Endothelial cell of umbilical vein (primary cell): ENCODE measurements at regions of chr21 and their contacts with region 1.

Region 1: DNA sequence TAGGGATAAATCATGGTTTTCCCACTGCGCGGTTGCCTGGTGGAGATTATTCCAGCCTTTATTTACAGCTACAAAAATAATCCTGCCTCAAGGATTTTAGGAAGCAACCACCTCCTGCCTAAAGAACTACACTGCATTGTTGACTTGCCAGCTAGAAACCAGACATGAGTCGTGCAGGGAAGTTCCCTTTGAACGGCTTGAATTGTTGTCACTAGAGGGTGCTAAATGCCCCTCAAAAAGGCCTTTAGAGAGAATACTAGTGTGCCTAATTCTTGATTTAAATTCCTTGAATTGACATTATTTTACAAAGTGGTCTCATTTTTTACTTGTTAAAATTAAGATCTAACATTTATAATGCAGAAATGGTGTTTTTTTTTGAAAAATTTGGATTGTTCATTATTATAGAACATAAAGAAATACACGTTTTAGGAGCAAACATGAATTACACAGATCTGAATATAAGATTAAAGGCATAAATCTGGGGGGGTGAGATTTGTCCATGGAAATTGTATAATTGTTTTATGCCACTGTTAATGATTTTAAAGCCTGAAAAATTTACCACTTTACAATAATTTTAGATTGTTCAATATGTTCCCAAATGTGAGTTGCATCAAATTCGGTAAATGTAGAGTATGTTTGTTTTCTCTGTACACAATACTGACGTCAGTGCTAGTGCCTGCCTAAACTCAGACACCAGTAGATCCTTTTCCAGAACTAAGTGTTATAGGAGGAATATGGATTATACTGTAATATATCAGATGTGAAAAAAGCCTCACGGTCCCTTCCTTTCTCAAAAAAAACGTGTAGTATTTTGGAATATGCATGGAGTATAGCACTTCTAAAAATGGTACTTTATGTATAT is 7.6 kb upstream of the ERG start:
- DNase-seq: peak; percentile 93
- H3K4me3 ChIP-seq: peak overlapping the region; percentile 7 to 93 (median 43)
- H3K27ac ChIP-seq: peak overlapping the region; percentile 97
- H3K4me1 ChIP-seq: peaks cover 48% of the 10 kb centered on the region
- H3K27me3 ChIP-seq: no peaks in the 10 kb centered on the region
- CTCF ChIP-seq: peak; percentile 62 to 65
- POLR2A ChIP-seq: peak; percentile 45

Region 2: DNA sequence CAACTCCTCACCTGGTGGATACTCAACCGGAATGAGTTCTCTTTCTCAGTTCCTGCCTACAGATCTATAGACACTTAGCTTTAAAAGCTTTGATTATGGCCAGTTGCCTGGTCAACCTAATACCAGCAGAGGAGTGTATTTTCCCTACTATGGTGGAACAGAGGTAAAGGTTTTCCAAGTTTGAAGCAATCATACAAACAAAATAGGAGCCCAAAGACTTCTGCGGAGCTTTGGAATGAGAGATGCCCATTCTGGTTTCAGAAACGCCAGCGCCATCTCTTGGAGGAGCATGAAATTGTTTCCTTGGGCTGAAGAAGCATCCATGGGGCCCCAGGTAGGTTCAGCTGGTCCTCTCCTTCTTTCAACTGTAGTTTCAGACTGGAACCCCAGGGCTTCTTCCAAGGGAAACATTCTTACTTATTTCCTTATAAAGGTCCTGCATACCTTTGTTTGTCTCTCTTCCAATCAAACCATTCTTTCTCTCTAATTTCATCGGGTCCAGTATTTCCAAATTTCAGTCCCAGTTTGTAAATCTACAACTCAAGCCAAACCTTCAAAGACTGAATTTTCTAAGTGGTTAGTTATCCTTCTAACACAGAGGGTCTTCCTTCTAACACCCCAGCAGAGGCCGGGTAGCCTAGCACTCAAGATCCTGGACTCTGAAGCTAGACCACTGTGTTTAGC is 153.2 kb before region 1 on chr21:
- CTCF ChIA-PET with region 1: no interaction called
- POLR2A ChIA-PET with region 1: no interaction called
- dilution Hi-C with region 1: no loop called
- intact Hi-C with region 1: no loop called
- DNase-seq: peak; percentile 76
- H3K4me3 ChIP-seq: no peak overlapping the region
- H3K27ac ChIP-seq: peak overlapping the region; percentile 69
- H3K4me1 ChIP-seq: peaks cover 14% of the 10 kb centered on the region
- H3K27me3 ChIP-seq: no peaks in the 10 kb centered on the region
- CTCF ChIP-seq: peak; percentile 78 to 79
- POLR2A ChIP-seq: no peak

Region 3: DNA sequence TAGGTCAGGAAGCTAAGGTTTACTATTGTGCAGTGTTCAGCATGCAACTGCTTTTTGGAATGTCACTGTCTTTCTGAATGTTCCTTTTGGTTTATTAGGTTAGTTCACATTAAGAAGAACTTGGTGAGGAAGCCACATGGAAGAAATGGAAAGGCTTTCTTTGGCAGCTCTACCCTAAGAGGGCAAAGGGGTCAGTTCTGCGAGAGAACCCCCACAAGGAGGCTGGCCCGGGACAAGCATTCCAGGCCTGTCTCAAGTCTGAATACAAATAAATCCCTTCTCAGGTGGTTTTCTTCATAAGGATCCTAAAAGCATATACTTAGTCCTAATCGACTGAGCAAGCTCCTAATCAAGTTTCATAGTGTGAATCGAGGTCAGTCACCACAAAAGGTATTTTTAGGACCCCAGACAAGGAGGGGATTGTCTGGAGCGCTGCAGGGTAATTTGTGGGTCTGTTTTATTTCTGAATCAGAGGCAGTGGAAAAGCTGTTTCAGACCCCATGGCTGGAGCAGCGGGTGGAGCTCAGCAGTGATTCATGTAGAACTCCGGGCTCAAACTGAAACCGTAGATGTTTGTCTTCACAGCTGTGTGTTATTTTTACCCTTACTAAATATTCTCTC is 70.9 kb before region 1 on chr21:
- CTCF ChIA-PET with region 1: no interaction called
- POLR2A ChIA-PET with region 1: no interaction called
- dilution Hi-C with region 1: no loop called
- intact Hi-C with region 1: no loop called
- DNase-seq: peak; percentile 72
- H3K4me3 ChIP-seq: no peak overlapping the region
- H3K27ac ChIP-seq: peak overlapping the region; percentile 29
- H3K4me1 ChIP-seq: peaks cover 32% of the 10 kb centered on the region
- H3K27me3 ChIP-seq: no peaks in the 10 kb centered on the region
- CTCF ChIP-seq: no peak
- POLR2A ChIP-seq: no peak

Region 4: DNA sequence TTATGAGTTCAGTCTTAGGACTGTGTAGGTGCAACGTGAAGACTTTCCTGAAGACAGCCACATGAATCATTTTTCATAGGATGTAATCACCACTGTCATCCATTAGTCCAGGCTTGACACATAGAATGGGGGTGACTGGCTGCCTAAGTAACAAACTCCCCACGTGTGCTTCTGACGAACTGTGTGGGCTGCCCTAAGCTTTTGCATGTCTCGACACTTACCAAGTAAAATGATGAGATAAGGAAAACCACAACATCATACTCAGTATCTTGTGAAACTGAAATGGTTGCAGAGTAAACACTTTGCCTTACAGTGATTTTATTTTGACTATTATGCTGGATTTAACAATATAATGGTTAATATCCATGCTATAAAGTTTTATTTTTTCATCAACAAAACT is 27.1 kb before region 1 on chr21:
- CTCF ChIA-PET with region 1: interaction called, 4 read pairs
- POLR2A ChIA-PET with region 1: no interaction called
- dilution Hi-C with region 1: no loop called
- intact Hi-C with region 1: loop called (anchors 1 kb)
- DNase-seq: no peak
- H3K4me3 ChIP-seq: no peak overlapping the region
- H3K27ac ChIP-seq: peak overlapping the region; percentile 99
- H3K4me1 ChIP-seq: peaks cover 94% of the 10 kb centered on the region
- H3K27me3 ChIP-seq: no peaks in the 10 kb centered on the region
- CTCF ChIP-seq: no peak
- POLR2A ChIP-seq: no peak

Region 5: DNA sequence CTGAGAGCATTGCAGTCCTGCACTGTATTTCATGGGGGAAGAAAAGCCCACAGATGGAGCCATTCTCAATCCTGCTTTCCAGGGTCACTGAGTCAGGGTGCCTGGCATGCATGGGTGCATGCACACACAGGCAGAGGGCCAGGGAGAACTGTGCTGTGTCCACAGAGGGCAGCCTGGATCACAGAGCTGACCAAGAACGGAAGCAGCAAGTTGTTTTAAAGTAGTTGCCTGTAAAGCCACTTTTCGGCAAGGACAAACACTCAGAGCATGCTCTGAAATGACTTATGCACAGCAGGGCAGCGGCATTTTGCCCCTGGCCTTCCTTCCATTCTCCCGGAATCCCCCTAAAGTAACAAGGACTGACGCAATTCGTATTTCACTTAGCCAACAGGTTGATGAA is 11.2 kb before region 1 on chr21:
- CTCF ChIA-PET with region 1: interaction called, 6 read pairs
- POLR2A ChIA-PET with region 1: no interaction called
- dilution Hi-C with region 1: no loop called
- intact Hi-C with region 1: loop called (anchors 1 kb)
- DNase-seq: peak; percentile 88
- H3K4me3 ChIP-seq: peak overlapping the region; percentile 84 to 100 (median 99)
- H3K27ac ChIP-seq: peak overlapping the region; percentile 100
- H3K4me1 ChIP-seq: peaks cover 63% of the 10 kb centered on the region
- H3K27me3 ChIP-seq: no peaks in the 10 kb centered on the region
- CTCF ChIP-seq: no peak
- POLR2A ChIP-seq: peak; percentile 86

Region 6: GRCh38 chr21:38527737-38528136 is 21.9 kb after region 1 on chr21:
- CTCF ChIA-PET with region 1: no interaction called
- POLR2A ChIA-PET with region 1: no interaction called
- dilution Hi-C with region 1: no loop called
- intact Hi-C with region 1: no loop called
- DNase-seq: no peak
- H3K4me3 ChIP-seq: no peak overlapping the region
- H3K27ac ChIP-seq: no peak overlapping the region
- H3K4me1 ChIP-seq: no peaks in the 10 kb centered on the region
- H3K27me3 ChIP-seq: no peaks in the 10 kb centered on the region
- CTCF ChIP-seq: no peak
- POLR2A ChIP-seq: no peak

Region 7: GRCh38 chr21:38596264-38597042 is 90.6 kb after region 1 on chr21:
- CTCF ChIA-PET with region 1: no interaction called
- POLR2A ChIA-PET with region 1: no interaction called
- dilution Hi-C with region 1: no loop called
- intact Hi-C with region 1: no loop called
- DNase-seq: no peak
- H3K4me3 ChIP-seq: no peak overlapping the region
- H3K27ac ChIP-seq: no peak overlapping the region
- H3K4me1 ChIP-seq: no peaks in the 10 kb centered on the region
- H3K27me3 ChIP-seq: peaks cover 5 to 16% of the 10 kb centered on the region in 2 experiments
- CTCF ChIP-seq: no peak
- POLR2A ChIP-seq: no peak

Region 8: GRCh38 chr21:38712071-38712470 is 206.2 kb after region 1 on chr21:
- CTCF ChIA-PET with region 1: interaction called, 20 read pairs
- POLR2A ChIA-PET with region 1: no interaction called
- dilution Hi-C with region 1: no loop called
- intact Hi-C with region 1: loop called (anchors 1 kb)
- DNase-seq: peak; percentile 68
- H3K4me3 ChIP-seq: no peak overlapping the region
- H3K27ac ChIP-seq: no peak overlapping the region
- H3K4me1 ChIP-seq: no peaks in the 10 kb centered on the region
- H3K27me3 ChIP-seq: peaks cover 9 to 10% of the 10 kb centered on the region in 2 experiments
- CTCF ChIP-seq: peak in 1 of 2 donors; percentile 55
- POLR2A ChIP-seq: no peak

Region 9: GRCh38 chr21:39125752-39126485 is 620.0 kb after region 1 on chr21:
- CTCF ChIA-PET with region 1: interaction called, 3 read pairs
- POLR2A ChIA-PET with region 1: no interaction called
- dilution Hi-C with region 1: no loop called
- intact Hi-C with region 1: loop called (anchors 1 kb)
- DNase-seq: peak; percentile 68
- H3K4me3 ChIP-seq: no peak overlapping the region
- H3K27ac ChIP-seq: no peak overlapping the region
- H3K4me1 ChIP-seq: no peaks in the 10 kb centered on the region
- H3K27me3 ChIP-seq: peaks cover 0 to 2% of the 10 kb centered on the region in 2 experiments
- CTCF ChIP-seq: peak; percentile 51 to 73
- POLR2A ChIP-seq: no peak

Region 10: GRCh38 chr21:39137248-39138178 is 631.6 kb after region 1 on chr21:
- CTCF ChIA-PET with region 1: interaction called, 21 read pairs
- POLR2A ChIA-PET with region 1: no interaction called
- dilution Hi-C with region 1: no loop called
- intact Hi-C with region 1: loop called (anchors 1 kb)
- DNase-seq: no peak
- H3K4me3 ChIP-seq: no peak overlapping the region
- H3K27ac ChIP-seq: no peak overlapping the region
- H3K4me1 ChIP-seq: no peaks in the 10 kb centered on the region
- H3K27me3 ChIP-seq: no peaks in the 10 kb centered on the region
- CTCF ChIP-seq: no peak
- POLR2A ChIP-seq: no peak

Region 11: GRCh38 chr21:39175154-39175553 is 669.3 kb after region 1 on chr21:
- CTCF ChIA-PET with region 1: interaction called, 4 read pairs
- POLR2A ChIA-PET with region 1: no interaction called
- dilution Hi-C with region 1: no loop called
- intact Hi-C with region 1: loop called (anchors 10 kb)
- DNase-seq: peak; percentile 44
- H3K4me3 ChIP-seq: no peak overlapping the region
- H3K27ac ChIP-seq: no peak overlapping the region
- H3K4me1 ChIP-seq: peaks cover 10% of the 10 kb centered on the region
- H3K27me3 ChIP-seq: no peaks in the 10 kb centered on the region
- CTCF ChIP-seq: peak in 1 of 2 donors; percentile 13
- POLR2A ChIP-seq: no peak